Kidney (tissue), 22 donors: ENCODE measurements at regions of chr1 and their contacts with region 1.

Region 1: GRCh38 chr1:150049926-150050325 is 17.6 kb upstream of the VPS45 start:
- DNase-seq: no peak
- H3K4me3 ChIP-seq: no peak overlapping the region
- H3K27ac ChIP-seq: no peak overlapping the region
- H3K4me1 ChIP-seq: no peaks in the 10 kb centered on the region
- H3K27me3 ChIP-seq: no peaks in the 10 kb centered on the region
- CTCF ChIP-seq: no peak

Region 2: DNA sequence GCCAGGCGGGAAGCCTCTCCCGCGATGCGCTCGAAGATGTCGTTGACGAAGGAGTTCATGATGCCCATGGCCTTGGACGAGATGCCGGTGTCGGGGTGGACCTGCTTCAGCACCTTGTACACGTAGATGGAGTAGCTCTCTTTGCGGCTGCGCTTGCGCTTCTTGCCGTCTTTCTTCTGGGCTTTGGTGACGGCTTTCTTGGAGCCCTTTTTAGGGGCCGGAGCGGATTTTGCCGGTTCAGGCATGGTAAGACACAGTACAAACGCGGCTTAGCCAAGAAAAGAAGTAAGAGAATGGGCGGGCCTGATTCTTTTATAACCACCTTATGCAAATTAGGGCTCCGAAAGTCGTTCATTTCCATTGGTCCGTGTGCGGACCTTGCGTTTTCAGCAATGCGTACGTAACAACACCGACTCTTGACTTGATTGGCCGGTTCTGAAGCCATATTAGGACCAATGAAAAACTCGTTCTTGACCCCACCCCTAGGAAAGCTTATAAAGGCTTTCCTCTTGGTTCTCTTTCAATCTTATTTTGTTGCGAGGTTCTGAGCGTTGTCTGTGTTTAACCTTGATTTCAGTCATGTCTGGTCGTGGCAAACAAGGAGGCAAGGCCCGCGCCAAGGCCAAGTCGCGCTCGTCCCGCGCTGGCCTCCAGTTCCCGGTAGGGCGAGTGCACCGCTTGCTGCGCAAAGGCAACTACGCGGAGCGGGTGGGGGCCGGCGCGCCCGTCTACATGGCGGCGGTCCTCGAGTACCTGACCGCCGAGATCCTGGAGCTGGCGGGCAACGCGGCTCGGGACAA is 163.3 kb before region 1 on chr1:
- intact Hi-C with region 1: no loop called
- DNase-seq: peak; percentile 93 to 100 (median 97)
- H3K4me3 ChIP-seq: peak overlapping the region; percentile 81 to 96 (median 94)
- H3K27ac ChIP-seq: peak overlapping the region; percentile 98 to 99
- H3K4me1 ChIP-seq: peaks cover 0 to 11% (median 8%) of the 10 kb centered on the region in 3 donors
- H3K27me3 ChIP-seq: no peaks in the 10 kb centered on the region
- CTCF ChIP-seq: peak; percentile 9

Region 3: DNA sequence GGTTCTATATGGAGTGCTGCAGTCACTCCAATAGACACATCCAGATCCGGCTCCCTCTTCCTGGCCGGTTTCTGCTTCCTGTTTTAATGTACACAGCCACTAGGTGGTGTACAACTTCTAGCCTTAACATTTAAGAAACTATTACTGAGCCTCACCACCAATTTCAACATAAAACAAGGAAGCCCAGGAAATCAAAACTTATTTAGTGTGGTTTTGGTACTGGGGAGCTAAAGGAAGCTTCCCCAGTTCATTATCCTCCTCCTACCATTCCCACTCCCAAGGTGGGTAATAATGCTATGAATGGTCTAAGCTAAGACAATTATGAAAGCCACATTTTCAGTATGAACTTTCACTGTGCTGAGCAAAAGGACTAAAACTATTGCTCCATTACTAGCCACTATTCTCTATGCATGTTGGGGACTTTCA is 87.8 kb before region 1 on chr1:
- intact Hi-C with region 1: loop called (anchors 5 kb)
- DNase-seq: peak in 4 of 5 donors; percentile 59 to 90 (median 76)
- H3K4me3 ChIP-seq: no peak overlapping the region
- H3K27ac ChIP-seq: no peak overlapping the region
- H3K4me1 ChIP-seq: no peaks in the 10 kb centered on the region
- H3K27me3 ChIP-seq: no peaks in the 10 kb centered on the region
- CTCF ChIP-seq: peak; percentile 88

Region 4: GRCh38 chr1:150144606-150145005 is 94.7 kb after region 1 on chr1:
- intact Hi-C with region 1: no loop called
- DNase-seq: no peak
- H3K4me3 ChIP-seq: no peak overlapping the region
- H3K27ac ChIP-seq: no peak overlapping the region
- H3K4me1 ChIP-seq: peaks cover 0 to 5% (median 0%) of the 10 kb centered on the region in 3 donors
- H3K27me3 ChIP-seq: no peaks in the 10 kb centered on the region
- CTCF ChIP-seq: no peak